Naive thymus-derived CD4-positive, alpha-beta T cell (primary cell): ENCODE measurements at regions of chr10 and their contacts with region 1.

Region 1: DNA sequence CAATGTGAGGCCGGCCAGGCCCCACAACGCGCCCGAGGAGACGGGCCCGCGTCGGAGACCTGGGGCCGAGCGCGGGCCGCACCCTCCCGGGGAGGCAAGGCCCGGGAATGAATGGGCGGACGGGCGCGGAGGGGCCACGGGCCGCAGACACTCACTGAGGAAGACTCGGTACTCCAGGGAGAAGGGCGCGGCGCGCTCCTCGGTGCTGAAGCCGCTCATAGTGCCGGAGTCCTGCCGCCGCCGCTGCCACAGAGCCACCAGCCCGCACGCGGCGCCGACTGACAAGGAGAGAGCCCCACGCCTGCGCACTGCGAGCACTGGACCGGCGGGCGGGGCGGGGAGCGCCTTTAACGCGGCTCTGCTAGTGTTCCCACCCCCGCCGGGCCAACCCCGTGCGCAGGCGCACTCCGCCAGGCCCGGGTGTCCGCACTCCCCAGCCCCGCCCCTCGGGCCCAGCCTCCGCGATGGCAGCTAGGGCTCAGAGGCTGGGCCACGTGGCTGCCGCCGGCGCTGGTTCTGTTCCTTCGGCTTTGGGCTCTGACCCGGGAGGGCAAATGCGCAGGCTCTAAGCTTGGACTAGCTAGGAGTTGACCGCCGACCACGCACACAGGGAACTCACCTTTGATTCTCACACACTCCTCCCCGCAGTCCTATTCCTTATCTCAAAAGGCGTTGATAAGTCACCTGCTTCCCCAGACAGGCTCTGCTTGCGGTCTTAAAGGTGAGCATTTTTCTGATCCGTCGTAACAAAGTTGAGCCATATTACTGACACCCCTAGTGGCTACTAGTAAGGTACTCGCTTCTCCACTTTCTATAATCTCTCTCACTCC is at the start of gene PPA1:
- DNase-seq: peak; percentile 98 to 100 (median 99)
- ATAC-seq: peak; percentile 99
- H3K4me3 ChIP-seq: peak within 1 kb of the TSS; percentile 88
- H3K4me3 Mint-ChIP-seq: peak within 1 kb of the TSS; percentile 74 to 94 (median 87)
- H3K27ac ChIP-seq: peak within 1 kb of the TSS; percentile 84
- H3K27ac Mint-ChIP-seq: peak within 1 kb of the TSS; percentile 79 to 99 (median 92)
- H3K4me1 ChIP-seq: peaks cover 4 to 5% of the 10 kb centered on the region in 2 donors
- H3K4me1 Mint-ChIP-seq: peaks cover 9 to 47% (median 35%) of the 10 kb centered on the region in 7 donors
- H3K27me3 ChIP-seq: no peaks in the 10 kb centered on the region
- H3K27me3 Mint-ChIP-seq: no peaks in the 10 kb centered on the region
- total RNA-seq, gene PPA1: 51.9 to 175 (median 69.6) TPM

Region 2: GRCh38 chr10:68924593-68924992 is 1308.7 kb before region 1 on chr10:
- CTCF ChIA-PET with region 1: no interaction called
- POLR2A ChIA-PET with region 1: no interaction called
- intact Hi-C with region 1: no loop called
- DNase-seq: no peak
- ATAC-seq: no peak
- H3K4me3 ChIP-seq: no peak overlapping the region
- H3K4me3 Mint-ChIP-seq: no peak overlapping the region
- H3K27ac ChIP-seq: no peak overlapping the region
- H3K27ac Mint-ChIP-seq: peak overlapping the region in 6 of 9 donors; percentile 32 to 85 (median 45)
- H3K4me1 ChIP-seq: no peaks in the 10 kb centered on the region
- H3K4me1 Mint-ChIP-seq: peaks cover 0 to 17% (median 12%) of the 10 kb centered on the region in 7 donors
- H3K27me3 ChIP-seq: no peaks in the 10 kb centered on the region
- H3K27me3 Mint-ChIP-seq: no peaks in the 10 kb centered on the region

Region 3: GRCh38 chr10:70169649-70170364 is 63.5 kb before region 1 on chr10:
- CTCF ChIA-PET with region 1: interaction called, 3 read pairs
- POLR2A ChIA-PET with region 1: interaction called, 6 read pairs
- intact Hi-C with region 1: loop called (anchors 1 kb)
- DNase-seq: peak in 2 of 9 donors; percentile 8 to 30
- ATAC-seq: peak; percentile 18
- H3K4me3 ChIP-seq: peak overlapping the region; percentile 88
- H3K4me3 Mint-ChIP-seq: peak overlapping the region; percentile 86 to 97 (median 94)
- H3K27ac ChIP-seq: peak overlapping the region; percentile 95
- H3K27ac Mint-ChIP-seq: peak overlapping the region; percentile 83 to 98 (median 96)
- H3K4me1 ChIP-seq: peaks cover 47 to 49% of the 10 kb centered on the region in 2 donors
- H3K4me1 Mint-ChIP-seq: peaks cover 46 to 70% (median 65%) of the 10 kb centered on the region in 7 donors
- H3K27me3 ChIP-seq: no peaks in the 10 kb centered on the region
- H3K27me3 Mint-ChIP-seq: no peaks in the 10 kb centered on the region

Region 4: GRCh38 chr10:70272925-70273316 is 39.6 kb after region 1 on chr10:
- CTCF ChIA-PET with region 1: no interaction called
- POLR2A ChIA-PET with region 1: no interaction called
- intact Hi-C with region 1: loop called (anchors 1 to 2 kb)
- DNase-seq: peak in 5 of 9 donors; percentile 3 to 42 (median 36)
- ATAC-seq: peak; percentile 77
- H3K4me3 ChIP-seq: no peak overlapping the region
- H3K4me3 Mint-ChIP-seq: peak overlapping the region in 5 of 10 donors; percentile 21 to 47 (median 23)
- H3K27ac ChIP-seq: no peak overlapping the region
- H3K27ac Mint-ChIP-seq: peak overlapping the region in 2 of 9 donors; percentile 30 to 46
- H3K4me1 ChIP-seq: no peaks in the 10 kb centered on the region
- H3K4me1 Mint-ChIP-seq: peaks cover 5 to 22% (median 6%) of the 10 kb centered on the region in 7 donors
- H3K27me3 ChIP-seq: no peaks in the 10 kb centered on the region
- H3K27me3 Mint-ChIP-seq: peaks cover 0 to 4% (median 0%) of the 10 kb centered on the region in 5 donors

Region 5: GRCh38 chr10:70381471-70382421 is 148.4 kb after region 1 on chr10:
- CTCF ChIA-PET with region 1: interaction called, 3 read pairs
- POLR2A ChIA-PET with region 1: no interaction called
- intact Hi-C with region 1: loop called (anchors 1 kb)
- DNase-seq: peak in 6 of 9 donors; percentile 25 to 53 (median 40)
- ATAC-seq: peak; percentile 43
- H3K4me3 ChIP-seq: peak overlapping the region; percentile 94
- H3K4me3 Mint-ChIP-seq: peak overlapping the region; percentile 82 to 92 (median 90)
- H3K27ac ChIP-seq: peak overlapping the region; percentile 32
- H3K27ac Mint-ChIP-seq: peak overlapping the region in 6 of 9 donors; percentile 17 to 86 (median 46)
- H3K4me1 ChIP-seq: peaks cover 4 to 6% of the 10 kb centered on the region in 2 donors
- H3K4me1 Mint-ChIP-seq: peaks cover 2 to 20% (median 10%) of the 10 kb centered on the region in 7 donors
- H3K27me3 ChIP-seq: no peaks in the 10 kb centered on the region
- H3K27me3 Mint-ChIP-seq: no peaks in the 10 kb centered on the region

Region 6: GRCh38 chr10:70815504-70816219 is 582.3 kb after region 1 on chr10 and contains the start of gene SGPL1:
- CTCF ChIA-PET with region 1: no interaction called
- POLR2A ChIA-PET with region 1: no interaction called
- intact Hi-C with region 1: loop called in 1 of 2 experiments (anchors 5 kb)
- DNase-seq: peak; percentile 65 to 93 (median 84)
- ATAC-seq: peak; percentile 99
- H3K4me3 ChIP-seq: peak within 1 kb of the TSS; percentile 67
- H3K4me3 Mint-ChIP-seq: peak within 1 kb of the TSS; percentile 83 to 95 (median 91)
- H3K27ac ChIP-seq: peak within 1 kb of the TSS; percentile 73
- H3K27ac Mint-ChIP-seq: peak within 1 kb of the TSS; percentile 72 to 93 (median 88)
- H3K4me1 ChIP-seq: peaks cover 4 to 20% of the 10 kb centered on the region in 2 donors
- H3K4me1 Mint-ChIP-seq: peaks cover 17 to 52% (median 43%) of the 10 kb centered on the region in 7 donors
- H3K27me3 ChIP-seq: no peaks in the 10 kb centered on the region
- H3K27me3 Mint-ChIP-seq: peaks cover 0 to 6% (median 0%) of the 10 kb centered on the region in 5 donors
- total RNA-seq, gene SGPL1: 20.9 to 35.5 (median 30.6) TPM